ENCODE measurements at regions of chr7 and their contacts with region 1.

Region 1: DNA sequence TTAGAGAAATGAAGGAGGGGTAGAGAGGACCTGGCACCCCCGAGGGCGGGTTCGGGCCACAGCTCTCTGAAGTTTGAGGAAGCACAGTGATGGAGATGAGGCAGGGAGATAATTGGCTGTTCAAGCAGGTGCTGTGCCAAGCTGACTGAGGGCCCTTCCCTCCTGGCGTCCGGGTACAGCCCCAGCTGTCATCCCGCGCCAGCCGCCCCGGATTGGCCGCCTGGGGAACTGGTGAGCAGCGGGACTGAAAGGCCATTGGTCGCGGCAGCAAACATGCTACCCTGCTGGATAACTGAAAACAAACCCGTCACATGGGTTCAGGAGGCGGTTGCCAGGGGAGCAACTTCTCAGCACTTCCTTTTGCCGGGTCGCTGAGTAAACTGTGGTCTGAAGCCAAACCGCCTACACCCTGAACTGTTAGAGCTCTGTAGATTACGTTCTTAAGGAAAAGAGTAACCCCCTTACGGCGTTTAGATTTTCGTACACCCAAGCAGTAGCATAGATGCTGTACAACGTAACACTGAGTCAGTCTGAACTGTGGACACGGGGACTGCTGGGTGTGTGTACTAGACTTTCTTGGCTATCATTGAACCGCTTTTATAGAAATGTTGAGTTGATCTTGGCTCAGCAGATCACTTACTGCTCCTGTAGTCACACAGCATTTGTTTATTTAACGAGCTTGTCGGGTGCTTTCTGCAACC is 1.3 kb downstream of the INSIG1 start:
- DNase-seq: peak; percentile 89 to 99 (median 94)
- ATAC-seq: peak; percentile 74
- H3K4me3 ChIP-seq: peak overlapping the region; percentile 59
- H3K4me3 Mint-ChIP-seq: peak overlapping the region; percentile 94
- H3K27ac ChIP-seq: peak overlapping the region; percentile 84 to 91
- H3K27ac Mint-ChIP-seq: peak overlapping the region; percentile 89
- H3K4me1 ChIP-seq: peaks cover 39% of the 10 kb centered on the region
- H3K4me1 Mint-ChIP-seq: peaks cover 41% of the 10 kb centered on the region
- H3K27me3 ChIP-seq: no peaks in the 10 kb centered on the region
- H3K27me3 Mint-ChIP-seq: no peaks in the 10 kb centered on the region
- CTCF ChIP-seq: no peak

Region 2: DNA sequence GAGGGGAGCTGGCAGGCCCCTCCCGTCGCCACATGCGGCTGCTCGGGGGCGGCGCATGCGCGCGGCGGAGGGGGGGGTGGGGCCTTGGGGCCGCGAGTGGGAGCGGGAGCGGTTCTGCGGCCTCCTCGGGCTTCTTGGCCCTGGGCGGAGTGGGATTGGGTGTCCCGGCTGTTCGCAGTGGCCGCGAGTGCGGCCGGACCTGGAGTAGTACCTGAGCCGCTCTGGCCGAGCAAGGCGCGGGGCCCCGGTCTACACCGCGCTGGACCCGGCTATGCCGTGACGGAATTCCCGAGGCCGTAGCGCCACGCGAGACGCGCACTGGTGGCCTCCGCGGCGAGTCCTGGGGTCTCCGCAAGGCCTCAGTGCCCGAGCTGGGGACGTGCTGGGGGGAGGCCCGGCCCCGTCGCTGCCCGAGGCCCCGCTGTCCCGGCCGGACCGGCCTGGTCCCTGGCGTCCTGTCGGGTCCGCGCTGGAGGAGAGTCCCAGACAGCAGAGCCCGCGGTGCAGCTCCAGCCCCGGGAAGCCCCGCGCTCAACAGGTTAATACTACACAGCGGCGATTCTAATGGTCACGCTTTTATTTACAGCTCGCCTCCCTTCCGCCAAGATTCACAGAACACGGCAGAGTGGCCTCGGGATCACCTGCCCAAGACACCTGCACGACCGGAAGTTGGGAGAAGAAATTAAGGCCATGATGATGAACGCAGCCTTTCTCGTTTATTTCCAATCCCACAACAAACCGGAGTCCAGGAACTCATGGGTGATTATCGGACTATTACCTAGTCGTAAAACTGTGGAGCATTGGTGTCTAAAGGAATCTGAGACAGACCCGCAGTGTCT is 295.4 kb before region 1 on chr7:
- CTCF ChIA-PET with region 1: interaction called, 4 read pairs
- POLR2A ChIA-PET with region 1: interaction called, 35 read pairs
- intact Hi-C with region 1: loop called (anchors 2 kb)
- DNase-seq: peak; percentile 71 to 92 (median 85)
- ATAC-seq: peak; percentile 86
- H3K4me3 ChIP-seq: peak overlapping the region; percentile 85
- H3K4me3 Mint-ChIP-seq: peak overlapping the region; percentile 97
- H3K27ac ChIP-seq: peak overlapping the region; percentile 40 to 52
- H3K27ac Mint-ChIP-seq: peak overlapping the region; percentile 88
- H3K4me1 ChIP-seq: peaks cover 16% of the 10 kb centered on the region
- H3K4me1 Mint-ChIP-seq: peaks cover 23% of the 10 kb centered on the region
- H3K27me3 ChIP-seq: no peaks in the 10 kb centered on the region
- H3K27me3 Mint-ChIP-seq: no peaks in the 10 kb centered on the region
- CTCF ChIP-seq: no peak

Region 3: DNA sequence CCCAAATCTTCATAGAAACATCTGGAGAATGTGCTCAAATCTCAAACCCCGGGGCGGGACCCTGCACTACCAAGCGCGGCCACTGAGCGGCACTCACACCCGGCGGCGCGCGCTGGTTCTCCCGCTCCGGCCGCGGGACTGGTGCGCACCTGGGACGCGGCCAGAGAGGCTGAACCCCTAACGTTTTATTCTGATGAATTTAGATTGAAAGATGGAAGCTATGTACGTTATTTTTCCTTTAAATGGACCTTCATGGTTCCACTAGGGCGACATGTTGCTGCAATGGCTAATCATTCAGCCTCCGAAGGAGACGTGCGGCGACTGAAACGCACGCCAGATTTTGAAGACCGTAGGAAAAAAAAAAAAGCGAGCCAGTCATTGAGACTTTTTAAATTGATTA is 108.3 kb before region 1 on chr7:
- CTCF ChIA-PET with region 1: interaction called, 7 read pairs
- POLR2A ChIA-PET with region 1: no interaction called
- intact Hi-C with region 1: loop called in 1 of 2 experiments (anchors 5 kb)
- DNase-seq: peak in 13 of 14 experiments; percentile 37 to 75 (median 58)
- ATAC-seq: peak; percentile 73
- H3K4me3 ChIP-seq: no peak overlapping the region
- H3K4me3 Mint-ChIP-seq: no peak overlapping the region
- H3K27ac ChIP-seq: no peak overlapping the region
- H3K27ac Mint-ChIP-seq: no peak overlapping the region
- H3K4me1 ChIP-seq: peaks cover 5% of the 10 kb centered on the region
- H3K4me1 Mint-ChIP-seq: no peaks in the 10 kb centered on the region
- H3K27me3 ChIP-seq: no peaks in the 10 kb centered on the region
- H3K27me3 Mint-ChIP-seq: peaks cover 26% of the 10 kb centered on the region
- CTCF ChIP-seq: peak; percentile 86

Region 4: GRCh38 chr7:155344600-155345433 is 45.8 kb after region 1 on chr7:
- CTCF ChIA-PET with region 1: interaction called, 57 read pairs
- POLR2A ChIA-PET with region 1: interaction called, 23 read pairs
- intact Hi-C with region 1: loop called (anchors 2 kb)
- DNase-seq: peak; percentile 64 to 91 (median 80)
- ATAC-seq: peak; percentile 97
- H3K4me3 ChIP-seq: peak overlapping the region; percentile 47
- H3K4me3 Mint-ChIP-seq: peak overlapping the region; percentile 35
- H3K27ac ChIP-seq: no peak overlapping the region
- H3K27ac Mint-ChIP-seq: no peak overlapping the region
- H3K4me1 ChIP-seq: peaks cover 11% of the 10 kb centered on the region
- H3K4me1 Mint-ChIP-seq: peaks cover 5% of the 10 kb centered on the region
- H3K27me3 ChIP-seq: peaks cover 11 to 12% of the 10 kb centered on the region in 2 experiments
- H3K27me3 Mint-ChIP-seq: peaks cover 10% of the 10 kb centered on the region
- CTCF ChIP-seq: peak; percentile 70

Region 5: DNA sequence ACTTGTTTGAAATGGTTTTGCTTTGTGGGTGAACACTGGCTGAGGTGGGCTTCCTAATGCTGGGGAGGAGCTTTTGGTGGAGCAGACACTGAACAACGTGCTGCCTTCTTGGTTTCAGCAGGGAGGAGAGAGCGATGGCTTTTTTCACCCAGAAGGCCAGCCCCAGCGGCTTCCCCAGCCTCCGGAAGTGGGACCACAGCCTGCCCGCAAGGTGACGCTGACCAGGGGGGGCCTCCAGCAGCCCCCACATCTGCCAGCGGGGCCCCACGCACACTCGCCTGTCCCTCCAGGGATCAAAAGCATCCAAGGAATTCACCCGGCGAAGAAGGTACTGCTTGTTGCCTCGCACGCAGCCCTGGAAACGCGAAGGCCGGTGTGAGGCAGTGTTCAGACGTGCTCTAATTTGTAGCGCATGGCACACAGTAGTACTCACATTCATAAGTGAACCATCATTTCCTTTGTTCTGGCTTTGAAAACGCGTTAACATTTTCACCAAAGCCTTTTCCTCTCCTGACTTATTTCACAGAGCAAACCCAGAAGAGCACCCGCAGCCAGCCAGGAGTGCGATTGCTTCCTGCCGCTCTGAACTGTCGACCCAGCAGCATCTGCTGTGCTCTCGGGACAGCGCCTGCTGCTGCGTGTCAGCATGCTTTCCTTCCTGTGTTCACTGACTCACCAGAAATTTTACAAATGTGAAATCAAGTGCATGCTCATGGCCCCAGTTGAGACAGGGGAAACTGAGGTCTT is 464.9 kb after region 1 on chr7:
- CTCF ChIA-PET with region 1: no interaction called
- POLR2A ChIA-PET with region 1: no interaction called
- intact Hi-C with region 1: loop called in 1 of 2 experiments (anchors 10 kb)
- DNase-seq: peak; percentile 24 to 79 (median 48)
- ATAC-seq: peak; percentile 85
- H3K4me3 ChIP-seq: peak overlapping the region; percentile 18
- H3K4me3 Mint-ChIP-seq: peak overlapping the region; percentile 84
- H3K27ac ChIP-seq: peak overlapping the region; percentile 57 to 67
- H3K27ac Mint-ChIP-seq: peak overlapping the region; percentile 84
- H3K4me1 ChIP-seq: peaks cover 36% of the 10 kb centered on the region
- H3K4me1 Mint-ChIP-seq: peaks cover 57% of the 10 kb centered on the region
- H3K27me3 ChIP-seq: no peaks in the 10 kb centered on the region
- H3K27me3 Mint-ChIP-seq: no peaks in the 10 kb centered on the region
- CTCF ChIP-seq: no peak

Region 6: DNA sequence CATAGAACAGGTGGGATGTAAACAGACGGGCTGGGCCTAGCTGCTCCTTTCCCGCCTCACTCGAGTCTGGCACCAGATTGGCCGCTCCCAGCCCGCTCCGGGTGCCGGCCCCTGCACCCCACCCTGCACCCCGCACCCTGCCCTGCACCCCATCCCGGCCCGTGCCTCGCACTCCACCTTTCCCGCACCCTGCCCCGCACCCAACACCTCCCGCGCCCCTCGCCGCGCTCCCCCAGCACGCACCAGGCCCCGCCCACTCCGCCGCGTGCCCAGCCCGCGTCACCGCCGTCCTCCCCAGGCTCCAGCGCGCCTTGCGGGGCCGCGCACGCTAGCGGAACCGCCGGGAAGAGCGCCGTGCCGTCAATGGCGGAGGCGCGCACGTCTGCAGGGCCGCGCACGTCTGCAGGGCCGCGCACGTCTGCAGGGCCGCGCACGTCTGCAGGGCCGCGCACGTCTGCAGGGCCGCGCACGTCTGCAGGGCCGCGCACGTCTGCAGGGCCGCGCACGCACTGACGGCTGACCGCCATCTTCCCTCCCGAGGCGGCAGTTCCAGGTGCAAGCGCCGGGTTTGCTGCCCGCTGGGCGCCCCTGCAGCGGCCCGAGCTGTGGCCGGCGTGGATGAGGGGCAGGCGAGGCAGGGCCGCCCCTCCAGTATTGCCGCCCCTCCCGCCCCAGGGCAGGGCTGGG is 1839.6 kb after region 1 on chr7 and contains the start of gene UBE3C:
- CTCF ChIA-PET with region 1: no interaction called
- POLR2A ChIA-PET with region 1: interaction called, 3 read pairs
- intact Hi-C with region 1: loop called in 1 of 2 experiments (anchors 10 kb)
- DNase-seq: peak; percentile 79 to 97 (median 90)
- ATAC-seq: peak; percentile 81
- H3K4me3 ChIP-seq: peak within 1 kb of the TSS; percentile 78
- H3K4me3 Mint-ChIP-seq: peak within 1 kb of the TSS; percentile 92
- H3K27ac ChIP-seq: peak within 1 kb of the TSS; percentile 85 to 86
- H3K27ac Mint-ChIP-seq: peak within 1 kb of the TSS; percentile 98
- H3K4me1 ChIP-seq: peaks cover 44% of the 10 kb centered on the region
- H3K4me1 Mint-ChIP-seq: peaks cover 49% of the 10 kb centered on the region
- H3K27me3 ChIP-seq: no peaks in the 10 kb centered on the region
- H3K27me3 Mint-ChIP-seq: no peaks in the 10 kb centered on the region
- CTCF ChIP-seq: no peak
- total RNA-seq, gene UBE3C: 30.8 to 32.3 TPM

Measured in CD4-positive, alpha-beta T cell (primary cell).